ENCODE measurements at regions of chr17 and their contacts with region 1.

Region 1: GRCh38 chr17:1047879-1048470 is 51.0 kb downstream of the TIMM22 start:
- DNase-seq: no peak
- H3K4me3 ChIP-seq: no peak overlapping the region
- H3K27ac ChIP-seq: peak overlapping the region; percentile 83 to 93 (median 88)
- H3K4me1 ChIP-seq: peaks cover 34 to 85% (median 73%) of the 10 kb centered on the region in 4 donors
- H3K27me3 ChIP-seq: no peaks in the 10 kb centered on the region
- CTCF ChIP-seq: no peak
- EP300 ChIP-seq: no peak
- POLR2A ChIP-seq: no peak

Region 2: DNA sequence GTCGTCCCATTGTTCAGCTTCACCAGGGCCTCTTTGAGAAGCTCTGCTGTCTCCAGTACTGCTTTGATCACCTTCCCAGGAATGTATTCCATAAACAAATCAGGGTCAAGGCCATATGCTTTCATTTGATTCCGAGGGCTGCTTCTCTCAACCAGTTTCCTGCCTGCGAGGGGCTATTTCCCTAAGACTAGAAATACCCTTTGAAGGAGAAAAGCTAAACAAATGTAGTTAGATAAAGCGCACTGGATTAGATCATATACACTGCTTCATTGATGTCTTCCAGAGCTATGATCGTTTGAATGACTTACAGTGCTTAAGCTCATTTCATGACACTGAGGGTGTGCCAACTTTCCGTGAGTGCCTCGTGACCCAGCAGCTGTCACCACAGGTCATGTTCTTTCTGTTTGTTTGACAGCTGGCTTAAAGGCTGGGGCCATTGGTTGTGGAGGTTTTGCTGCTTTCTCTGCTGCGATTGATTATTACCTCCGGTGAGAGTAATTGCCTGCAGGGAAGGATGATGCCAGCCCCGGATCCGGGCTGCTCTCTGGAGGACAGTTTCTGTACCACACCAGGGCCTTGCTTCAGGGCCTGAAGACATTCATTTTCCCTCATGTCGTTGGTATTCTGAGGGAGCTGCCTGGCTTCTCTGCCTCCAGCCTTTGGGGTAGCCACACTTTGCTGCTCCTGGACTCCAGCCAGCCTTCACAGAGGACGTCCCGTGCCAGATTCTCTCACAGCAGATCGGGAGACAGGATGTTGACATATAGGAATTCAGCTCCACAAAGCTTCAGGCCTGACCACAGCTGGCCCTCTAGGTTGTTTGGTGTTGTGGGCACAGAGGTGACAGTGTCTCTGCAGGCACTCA is 47.1 kb before region 1 on chr17:
- intact Hi-C with region 1: loop called (anchors 2 kb)
- DNase-seq: no peak
- H3K4me3 ChIP-seq: no peak overlapping the region
- H3K27ac ChIP-seq: peak overlapping the region; percentile 81 to 92 (median 88)
- H3K4me1 ChIP-seq: peaks cover 79 to 92% (median 91%) of the 10 kb centered on the region in 4 donors
- H3K27me3 ChIP-seq: no peaks in the 10 kb centered on the region
- CTCF ChIP-seq: peak in 1 of 3 experiments; percentile 7
- EP300 ChIP-seq: no peak
- POLR2A ChIP-seq: no peak

Region 3: DNA sequence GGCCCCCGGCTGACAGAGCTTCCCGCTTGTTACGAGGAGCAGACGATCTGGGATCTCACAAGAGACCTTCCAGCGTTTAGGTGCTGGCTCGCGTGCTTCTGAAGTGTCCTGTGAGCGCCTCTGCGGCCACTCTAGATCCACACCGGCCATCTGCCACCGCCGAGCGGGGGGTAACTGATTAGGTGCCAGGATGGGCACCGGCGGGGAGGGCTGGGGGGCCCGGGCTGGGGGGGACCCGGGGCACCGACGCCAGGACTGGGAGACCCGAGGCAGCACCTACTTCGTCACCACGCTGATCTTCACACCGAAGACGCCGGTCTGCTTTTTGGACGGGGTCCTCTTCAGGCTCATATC is 35.6 kb before region 1 on chr17:
- intact Hi-C with region 1: no loop called
- DNase-seq: no peak
- H3K4me3 ChIP-seq: no peak overlapping the region
- H3K27ac ChIP-seq: no peak overlapping the region
- H3K4me1 ChIP-seq: peaks cover 14 to 36% (median 31%) of the 10 kb centered on the region in 4 donors
- H3K27me3 ChIP-seq: no peaks in the 10 kb centered on the region
- CTCF ChIP-seq: no peak
- EP300 ChIP-seq: no peak
- POLR2A ChIP-seq: no peak

Region 4: DNA sequence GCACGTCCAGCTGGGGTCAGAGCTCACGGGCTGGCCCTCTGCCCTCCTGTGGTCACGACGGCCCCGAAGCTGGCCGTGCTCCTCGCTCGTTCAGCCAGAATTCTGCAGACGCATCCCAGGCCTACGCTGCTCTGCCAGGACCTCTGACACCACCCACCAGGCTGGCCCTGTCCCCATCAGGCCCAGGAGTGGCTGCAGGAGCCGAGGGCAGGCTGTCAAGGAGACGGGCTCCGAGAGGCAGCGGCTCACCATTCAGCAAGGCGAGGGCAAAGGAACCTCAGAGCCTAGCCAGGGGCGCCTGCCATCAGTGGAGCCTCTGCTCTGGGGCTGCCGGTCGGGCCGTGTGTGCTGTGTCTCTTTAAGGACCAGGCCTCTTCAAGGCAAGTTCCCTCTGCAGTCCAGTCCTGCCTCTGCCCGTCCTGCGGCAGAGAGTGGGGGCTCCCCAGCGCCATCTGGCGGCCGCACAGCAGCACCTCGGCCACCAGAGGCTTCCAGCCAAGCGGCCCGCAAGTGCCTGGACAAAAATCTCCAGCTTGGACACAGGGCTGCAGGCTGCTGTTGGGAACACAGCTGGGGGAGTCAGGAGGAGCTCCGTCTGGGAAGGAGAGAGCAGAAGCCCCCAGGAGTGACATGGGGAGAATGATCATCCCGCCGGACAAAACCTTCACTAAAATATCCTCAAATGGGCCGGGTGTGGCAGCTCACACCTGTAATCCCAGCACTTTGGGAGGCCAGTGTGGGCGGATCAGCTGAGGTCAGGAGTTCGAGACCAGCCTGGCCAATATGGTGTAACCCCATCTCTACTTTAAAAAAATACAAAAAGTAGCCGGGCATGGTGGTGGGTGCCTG is 139.2 kb after region 1 on chr17:
- intact Hi-C with region 1: no loop called
- DNase-seq: peak; percentile 92
- H3K4me3 ChIP-seq: peak overlapping the region; percentile 32 to 43 (median 36)
- H3K27ac ChIP-seq: peak overlapping the region; percentile 71 to 83 (median 77)
- H3K4me1 ChIP-seq: peaks cover 52 to 61% (median 55%) of the 10 kb centered on the region in 4 donors
- H3K27me3 ChIP-seq: no peaks in the 10 kb centered on the region
- CTCF ChIP-seq: peak; percentile 95 to 98 (median 97)
- EP300 ChIP-seq: no peak
- POLR2A ChIP-seq: no peak

Measured in esophagus muscularis mucosa (tissue), 4 donors.